H1 (cell line): ENCODE measurements at regions of chr9 and their contacts with region 1.

Region 1: GRCh38 chr9:18255158-18255629 is 218.8 kb upstream of the ADAMTSL1 start:
- DNase-seq: peak; percentile 31 to 87
- H3K4me3 ChIP-seq: no peak overlapping the region
- H3K27ac ChIP-seq: no peak overlapping the region
- H3K4me1 ChIP-seq: no peaks in the 10 kb centered on the region
- H3K27me3 ChIP-seq: no peaks in the 10 kb centered on the region
- CTCF ChIP-seq: peak; percentile 68 to 90 (median 78)
- EP300 ChIP-seq: no peak
- POLR2A ChIP-seq: no peak
- RAD21 ChIP-seq: peak; percentile 90 to 96

Region 2: GRCh38 chr9:18294229-18294628 is 39.0 kb after region 1 on chr9:
- CTCF ChIA-PET with region 1: interaction called, 21 read pairs
- POLR2A ChIA-PET with region 1: no interaction called
- DNase-seq: no peak
- H3K4me3 ChIP-seq: no peak overlapping the region
- H3K27ac ChIP-seq: no peak overlapping the region
- H3K4me1 ChIP-seq: no peaks in the 10 kb centered on the region
- H3K27me3 ChIP-seq: no peaks in the 10 kb centered on the region
- CTCF ChIP-seq: no peak
- EP300 ChIP-seq: no peak
- POLR2A ChIP-seq: no peak
- RAD21 ChIP-seq: no peak